Activated naive CD4-positive, alpha-beta T cell treated with anti-CD3 and anti-CD28 coated beads for 36 hours (primary cell): ENCODE measurements at regions of chr4 and their contacts with region 1.

Region 1: DNA sequence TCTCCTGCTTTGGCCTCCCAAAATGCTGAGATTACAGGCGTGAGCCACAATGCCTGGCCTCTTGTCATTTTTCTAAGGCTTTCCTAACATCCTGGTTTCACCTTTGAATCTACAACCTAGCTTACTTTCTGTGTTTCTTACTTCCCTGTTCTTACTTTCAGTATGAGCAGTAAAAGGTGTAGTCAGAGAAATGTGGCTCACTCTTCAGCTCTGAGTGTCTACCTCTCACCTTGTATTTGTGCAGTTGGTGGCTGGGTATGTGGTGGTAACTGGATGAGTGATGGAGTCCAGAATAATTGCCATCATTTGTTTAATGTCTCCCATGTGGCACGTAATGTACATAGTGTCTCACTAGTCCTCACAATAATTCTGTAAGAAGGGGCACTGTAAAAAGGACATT is 19.1 kb upstream of the CXCL11 start:
- DNase-seq: peak; percentile 58
- H3K4me3 Mint-ChIP-seq: no peak overlapping the region
- H3K27ac Mint-ChIP-seq: no peak overlapping the region
- H3K4me1 Mint-ChIP-seq: peaks cover 40% of the 10 kb centered on the region
- H3K27me3 Mint-ChIP-seq: peaks cover 30% of the 10 kb centered on the region

Region 2: DNA sequence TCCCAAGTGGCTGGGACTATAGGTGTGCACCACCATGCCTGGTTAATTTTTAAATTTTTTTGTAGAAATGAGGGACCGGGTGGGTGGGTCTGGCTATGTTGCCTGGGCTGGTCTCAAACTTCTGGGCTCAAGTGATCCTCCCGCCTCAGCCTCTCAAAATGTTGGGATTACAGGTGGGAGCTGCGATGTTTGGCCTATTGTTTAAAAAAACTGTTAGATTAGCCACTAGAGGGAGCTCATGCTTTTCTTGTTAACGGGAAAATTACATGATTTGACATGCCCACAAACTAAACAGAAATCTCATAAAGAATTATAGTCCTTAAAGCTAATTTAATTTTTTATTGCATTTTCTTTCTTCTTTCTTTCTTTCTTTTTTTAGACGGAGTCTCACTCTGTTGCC is 59.3 kb before region 1 on chr4:
- CTCF ChIA-PET with region 1: interaction called, 25 read pairs
- intact Hi-C with region 1: no loop called
- DNase-seq: peak; percentile 16
- H3K4me3 Mint-ChIP-seq: no peak overlapping the region
- H3K27ac Mint-ChIP-seq: no peak overlapping the region
- H3K4me1 Mint-ChIP-seq: peaks cover 6% of the 10 kb centered on the region
- H3K27me3 Mint-ChIP-seq: peaks cover 2% of the 10 kb centered on the region

Region 3: DNA sequence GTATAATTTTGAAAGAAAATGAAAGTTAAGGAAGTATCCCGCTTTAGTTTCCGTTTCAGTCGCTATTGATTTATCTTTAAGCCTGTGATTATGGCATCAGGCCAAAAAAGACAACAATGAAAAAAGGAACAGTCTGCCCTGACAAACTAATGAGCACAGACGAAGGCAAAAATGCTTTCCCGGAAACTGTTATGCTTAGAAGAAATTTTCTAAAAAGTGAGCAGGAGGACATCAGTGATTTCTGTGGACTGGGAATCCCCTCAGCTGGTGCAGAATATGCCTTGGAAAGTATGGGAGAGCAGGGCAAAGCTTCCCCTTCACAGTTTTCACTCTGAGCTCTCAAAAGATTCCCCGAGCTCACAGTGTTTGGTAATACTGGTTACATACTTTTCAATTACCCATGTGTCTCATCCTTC is 26.7 kb before region 1 on chr4:
- CTCF ChIA-PET with region 1: interaction called, 5 read pairs
- intact Hi-C with region 1: loop called (anchors 1 kb)
- DNase-seq: no peak
- H3K4me3 Mint-ChIP-seq: peak overlapping the region; percentile 4
- H3K27ac Mint-ChIP-seq: no peak overlapping the region
- H3K4me1 Mint-ChIP-seq: peaks cover 31% of the 10 kb centered on the region
- H3K27me3 Mint-ChIP-seq: peaks cover 5% of the 10 kb centered on the region

Region 4: GRCh38 chr4:76213415-76214176 is 158.6 kb after region 1 on chr4 and contains the start of gene SCARB2:
- CTCF ChIA-PET with region 1: interaction called, 3 read pairs
- intact Hi-C with region 1: loop called (anchors 5 kb)
- DNase-seq: peak; percentile 76
- H3K4me3 Mint-ChIP-seq: peak within 1 kb of the TSS; percentile 76
- H3K27ac Mint-ChIP-seq: peak within 1 kb of the TSS; percentile 74
- H3K4me1 Mint-ChIP-seq: peaks cover 31% of the 10 kb centered on the region
- H3K27me3 Mint-ChIP-seq: no peaks in the 10 kb centered on the region
- total RNA-seq, gene SCARB2: 5.4 to 7.8 TPM

Region 5: DNA sequence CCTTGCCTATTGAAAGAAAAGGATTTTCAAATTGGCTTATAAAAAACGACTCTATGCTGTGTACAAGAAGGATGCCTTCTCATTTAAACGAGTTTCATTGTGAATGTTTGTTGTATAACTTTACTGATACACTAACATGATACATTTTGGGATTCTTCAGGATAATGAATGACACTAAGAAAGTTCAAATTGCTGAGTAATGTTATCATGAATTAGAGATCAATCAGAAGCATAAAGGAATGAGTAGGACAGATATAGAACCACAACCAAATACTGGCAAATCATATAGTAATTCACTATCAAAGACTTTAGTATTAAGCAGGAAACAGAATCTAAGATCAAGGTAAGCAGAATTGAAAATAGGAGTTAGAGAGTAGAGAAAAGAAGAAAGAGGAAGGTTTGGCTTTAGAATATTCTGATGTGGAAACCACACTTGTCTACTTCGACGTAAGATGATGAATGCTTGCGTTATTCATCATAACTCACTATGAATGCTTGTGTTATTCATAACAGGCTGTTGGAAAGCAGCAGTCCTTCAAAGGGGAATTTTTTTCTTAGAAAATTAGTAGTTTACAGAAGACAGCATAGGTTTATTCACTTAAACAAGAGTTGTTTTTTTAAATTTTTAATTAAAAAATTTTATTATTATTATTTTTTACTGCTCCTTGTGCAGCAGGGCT is 352.6 kb after region 1 on chr4:
- CTCF ChIA-PET with region 1: no interaction called
- intact Hi-C with region 1: loop called (anchors 5 kb)
- DNase-seq: no peak
- H3K4me3 Mint-ChIP-seq: no peak overlapping the region
- H3K27ac Mint-ChIP-seq: no peak overlapping the region
- H3K4me1 Mint-ChIP-seq: peaks cover 4% of the 10 kb centered on the region
- H3K27me3 Mint-ChIP-seq: peaks cover 7% of the 10 kb centered on the region

Region 6: DNA sequence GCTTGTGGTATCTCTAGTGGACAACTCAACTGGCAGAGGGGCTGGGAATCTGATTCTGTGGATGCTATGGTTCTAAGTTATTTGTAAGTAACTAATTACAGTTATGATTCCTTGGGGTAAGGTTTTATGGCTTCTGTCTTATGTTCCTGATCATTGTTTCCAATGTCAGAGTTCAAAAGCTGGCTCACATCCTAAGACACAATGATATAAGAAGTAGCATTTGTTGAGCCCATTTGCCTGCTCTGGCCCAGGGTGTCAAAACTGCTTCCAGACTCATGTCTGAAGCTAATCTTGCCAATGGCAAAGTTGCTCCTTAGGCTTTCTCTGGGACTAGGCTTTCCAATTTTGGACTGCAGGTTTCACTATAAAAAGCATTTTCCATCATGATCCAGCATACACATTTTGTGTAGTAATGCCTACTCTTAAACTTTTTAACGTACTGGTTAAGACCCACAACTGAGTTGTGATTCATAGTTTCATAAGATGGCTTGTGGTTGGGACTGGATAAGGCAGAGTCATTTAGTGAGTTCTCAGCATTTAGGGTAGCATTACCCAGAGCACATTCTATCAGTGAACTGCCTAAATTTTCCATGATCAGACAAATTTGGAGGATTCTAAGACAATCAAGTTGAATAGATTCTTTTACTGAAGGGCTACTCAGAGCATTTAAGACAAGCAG is 970.8 kb after region 1 on chr4:
- CTCF ChIA-PET with region 1: no interaction called
- intact Hi-C with region 1: loop called (anchors 2 kb)
- DNase-seq: peak; percentile 31
- H3K4me3 Mint-ChIP-seq: no peak overlapping the region
- H3K27ac Mint-ChIP-seq: no peak overlapping the region
- H3K4me1 Mint-ChIP-seq: peaks cover 39% of the 10 kb centered on the region
- H3K27me3 Mint-ChIP-seq: peaks cover 5% of the 10 kb centered on the region

Region 7: GRCh38 chr4:77586951-77587383 is 1532.0 kb after region 1 on chr4:
- CTCF ChIA-PET with region 1: no interaction called
- intact Hi-C with region 1: loop called (anchors 5 kb)
- DNase-seq: peak; percentile 87
- H3K4me3 Mint-ChIP-seq: peak overlapping the region; percentile 17
- H3K27ac Mint-ChIP-seq: peak overlapping the region; percentile 80
- H3K4me1 Mint-ChIP-seq: peaks cover 49% of the 10 kb centered on the region
- H3K27me3 Mint-ChIP-seq: peaks cover 15% of the 10 kb centered on the region